Activated B cell treated with CpG ODN at 0.5 μM for 24 hours (primary cell): ENCODE measurements at regions of chr11 and their contacts with region 1.

Region 1: DNA sequence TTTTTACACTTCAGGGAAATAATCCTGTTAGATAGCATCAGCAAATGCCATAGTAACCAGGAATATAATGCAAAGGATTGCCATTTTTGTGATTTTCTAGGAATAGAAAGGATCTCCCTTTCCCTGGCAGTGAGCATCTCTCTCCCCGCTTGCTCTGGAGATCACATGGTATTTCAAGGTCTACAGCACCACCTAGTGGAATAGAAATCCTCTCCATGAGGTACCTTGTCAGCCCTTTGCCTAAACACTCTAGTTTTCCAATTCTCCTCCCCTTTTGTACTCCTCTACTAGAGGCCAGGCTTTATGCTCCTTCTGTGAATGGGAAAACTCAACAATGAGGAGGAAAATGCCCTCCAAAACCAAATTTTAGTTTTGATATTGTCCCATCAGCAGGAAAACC is 78.4 kb downstream of the XRRA1 start:
- DNase-seq: no peak
- ATAC-seq: no peak
- H3K4me3 Mint-ChIP-seq: no peak overlapping the region
- H3K27ac Mint-ChIP-seq: no peak overlapping the region
- H3K4me1 Mint-ChIP-seq: no peaks in the 10 kb centered on the region
- H3K27me3 Mint-ChIP-seq: no peaks in the 10 kb centered on the region
- CTCF ChIP-seq: no peak

Region 2: DNA sequence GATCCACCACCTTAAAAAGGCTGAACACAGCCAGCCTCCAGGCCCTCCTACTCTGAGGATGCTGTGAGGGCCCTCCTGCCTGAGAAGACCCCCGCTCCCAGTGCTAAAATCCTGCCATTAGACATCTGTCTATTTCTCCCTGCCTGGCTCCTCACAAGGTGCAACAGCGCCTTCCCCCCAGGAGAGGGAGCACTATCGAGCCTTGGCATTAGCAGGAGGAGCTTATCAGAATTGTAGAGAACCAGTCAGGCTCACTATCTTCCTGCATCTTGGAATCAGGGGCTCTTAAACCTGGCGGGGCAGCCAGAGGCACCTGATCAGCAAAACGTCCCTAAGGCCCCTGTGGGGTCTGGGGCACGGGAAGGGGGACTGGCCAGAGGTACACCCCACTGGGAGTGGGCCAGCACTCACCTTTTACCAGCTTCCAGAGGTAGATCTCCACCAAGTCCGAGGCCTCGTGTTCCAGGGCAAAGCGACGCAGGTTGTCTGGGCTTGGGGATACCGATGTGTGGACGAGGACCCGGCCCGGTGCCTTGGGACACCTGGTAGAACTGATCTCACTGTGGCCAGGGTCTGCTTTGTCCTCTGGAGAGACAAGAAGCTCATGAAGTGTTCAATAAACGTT is 168.0 kb before region 1 on chr11:
- CTCF ChIA-PET with region 1: interaction called, 7 read pairs
- POLR2A ChIA-PET with region 1: no interaction called
- intact Hi-C with region 1: loop called (anchors 1 kb)
- DNase-seq: peak; percentile 20
- ATAC-seq: peak; percentile 76
- H3K4me3 Mint-ChIP-seq: no peak overlapping the region
- H3K27ac Mint-ChIP-seq: no peak overlapping the region
- H3K4me1 Mint-ChIP-seq: peaks cover under 1% of the 10 kb centered on the region
- H3K27me3 Mint-ChIP-seq: peaks cover 6% of the 10 kb centered on the region
- CTCF ChIP-seq: peak; percentile 69